ENCODE measurements at regions of chr3 and their contacts with region 1.

Region 1: DNA sequence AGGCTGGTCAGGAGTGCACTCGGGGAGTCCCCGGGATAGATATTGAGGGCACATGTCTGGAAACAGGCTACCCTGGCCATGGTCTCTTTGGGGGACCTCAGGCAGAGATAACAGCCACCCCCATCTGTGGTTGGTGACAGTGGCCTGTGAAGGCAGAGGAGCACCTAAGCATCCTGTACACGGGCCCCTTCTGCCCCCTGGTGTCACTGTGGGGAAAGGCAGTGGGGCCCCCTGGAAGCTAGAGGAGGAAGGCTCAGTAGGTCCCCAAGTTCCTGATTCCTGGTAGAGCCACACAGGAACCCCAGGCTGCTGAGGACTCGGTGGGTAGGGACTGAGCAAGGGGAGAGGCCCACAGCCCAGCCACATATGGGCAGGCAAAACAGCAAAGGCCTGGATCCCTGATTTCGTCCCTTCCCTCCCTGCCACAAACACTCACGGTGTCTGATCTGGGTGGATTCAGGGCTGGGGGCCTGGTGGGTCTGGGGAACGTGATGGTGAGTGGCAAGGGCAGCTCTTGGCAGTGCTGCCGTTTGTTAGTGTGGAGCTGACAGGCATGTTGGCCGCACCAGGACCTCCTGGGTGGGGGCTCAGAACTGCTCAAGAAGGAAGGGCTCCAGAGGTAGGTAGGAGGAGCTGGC is 14.1 kb upstream of the CXCR6 start:
- DNase-seq: peak; percentile 79
- ATAC-seq: peak; percentile 99
- H3K4me3 Mint-ChIP-seq: no peak overlapping the region
- H3K27ac Mint-ChIP-seq: no peak overlapping the region
- H3K4me1 Mint-ChIP-seq: peaks cover 3% of the 10 kb centered on the region
- H3K27me3 Mint-ChIP-seq: no peaks in the 10 kb centered on the region

Region 2: GRCh38 chr3:45841757-45842491 is 87.2 kb before region 1 on chr3 and contains the start of gene LZTFL1:
- CTCF ChIA-PET with region 1: interaction called, 10 read pairs
- DNase-seq: peak; percentile 96
- ATAC-seq: peak; percentile 82
- H3K4me3 Mint-ChIP-seq: peak within 1 kb of the TSS; percentile 84
- H3K27ac Mint-ChIP-seq: peak within 1 kb of the TSS; percentile 80
- H3K4me1 Mint-ChIP-seq: peaks cover 30% of the 10 kb centered on the region
- H3K27me3 Mint-ChIP-seq: peaks cover 20% of the 10 kb centered on the region
- total RNA-seq, gene LZTFL1: 6.1 to 9.3 TPM

Region 3: GRCh38 chr3:45958321-45958791 is 29.2 kb after region 1 on chr3:
- CTCF ChIA-PET with region 1: no interaction called
- DNase-seq: no peak
- ATAC-seq: no peak
- H3K4me3 Mint-ChIP-seq: no peak overlapping the region
- H3K27ac Mint-ChIP-seq: peak overlapping the region; percentile 35
- H3K4me1 Mint-ChIP-seq: peaks cover 59% of the 10 kb centered on the region
- H3K27me3 Mint-ChIP-seq: no peaks in the 10 kb centered on the region

Region 4: GRCh38 chr3:46065294-46065721 is 136.1 kb after region 1 on chr3:
- CTCF ChIA-PET with region 1: no interaction called
- DNase-seq: peak; percentile 71
- ATAC-seq: peak; percentile 70
- H3K4me3 Mint-ChIP-seq: no peak overlapping the region
- H3K27ac Mint-ChIP-seq: peak overlapping the region; percentile 16
- H3K4me1 Mint-ChIP-seq: peaks cover 47% of the 10 kb centered on the region
- H3K27me3 Mint-ChIP-seq: peaks cover 9% of the 10 kb centered on the region